GM13977 (cell line): ENCODE measurements at regions of chr2 and their contacts with region 1.

Region 1: GRCh38 chr2:237072067-237072931 is 13.4 kb upstream of the COPS8 start:
- DNase-seq: peak; percentile 52
- CTCF ChIP-seq: peak; percentile 94

Region 2: GRCh38 chr2:235766278-235766677 is 1306.0 kb before region 1 on chr2:
- in situ Hi-C with region 1: loop called (anchors 25 kb)
- DNase-seq: peak; percentile 85
- CTCF ChIP-seq: peak; percentile 79

Region 3: GRCh38 chr2:236343400-236344161 is 728.7 kb before region 1 on chr2:
- in situ Hi-C with region 1: loop called (anchors 10 kb)
- DNase-seq: peak; percentile 77
- CTCF ChIP-seq: peak; percentile 79

Region 4: GRCh38 chr2:236512902-236513435 is 559.3 kb before region 1 on chr2:
- in situ Hi-C with region 1: loop called (anchors 25 kb)
- DNase-seq: peak; percentile 68
- CTCF ChIP-seq: peak; percentile 69